A549 (cell line): ENCODE measurements at regions of chr17 and their contacts with region 1.

Region 1: GRCh38 chr17:82418001-82418986 is at the starts of genes HEXD and OGFOD3:
- DNase-seq: peak; percentile 86 to 90
- ATAC-seq: peak; percentile 83 to 86
- H3K4me3 ChIP-seq: peak within 1 kb of the TSS; percentile 67
- H3K27ac ChIP-seq: peak within 1 kb of the TSS; percentile 92 to 96
- H3K4me1 ChIP-seq: peaks cover 11% of the 10 kb centered on the region; the same call in 2 of the 3 replicates
- CTCF ChIP-seq: no peak
- EP300 ChIP-seq: no peak
- POLR2A ChIP-seq: peak; percentile 81
- RAD21 ChIP-seq: no peak; a peak in 1 of 5 replicates
- polyA plus RNA-seq, gene HEXD: 18.0 and 18.4 TPM in 2 replicates
- polyA plus RNA-seq, gene OGFOD3: 14.9 and 15.2 TPM in 2 replicates

Region 2: DNA sequence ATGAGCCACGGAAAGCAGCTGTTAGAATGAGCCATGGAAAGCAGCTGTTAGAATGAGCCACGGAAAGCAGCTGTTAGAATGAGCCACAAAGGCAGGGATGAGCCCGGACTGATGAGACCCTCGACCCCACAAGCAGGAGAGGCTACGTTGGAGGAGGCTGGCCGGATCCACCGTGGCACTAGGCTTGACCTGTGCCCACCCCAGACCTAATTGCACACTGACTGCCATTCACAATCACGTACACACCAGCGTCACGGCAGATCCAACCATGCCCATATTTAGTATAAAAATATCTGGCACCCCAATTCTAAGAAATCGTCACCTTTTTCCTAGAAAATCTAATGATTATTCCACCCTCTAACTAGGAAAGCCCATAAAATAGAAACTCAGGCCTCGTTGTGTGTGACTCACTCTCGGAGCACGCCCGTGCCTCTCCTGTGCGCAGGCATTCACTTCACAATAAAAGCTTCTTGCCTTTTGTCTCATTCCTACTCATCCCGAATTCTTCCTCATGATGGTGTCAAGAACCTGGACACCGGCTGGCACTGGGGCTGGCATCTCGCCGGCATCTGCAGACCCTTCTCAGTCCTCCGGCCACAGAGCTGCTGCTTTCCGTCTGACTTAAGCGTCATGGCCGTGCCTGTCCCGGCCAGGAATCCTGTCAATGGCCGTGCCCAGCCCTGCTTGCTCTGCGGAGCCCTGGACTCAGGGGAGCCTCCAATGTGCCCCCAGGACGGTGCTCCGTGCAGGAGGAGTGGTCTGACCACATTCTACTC is 79.2 kb before region 1 on chr17:
- CTCF ChIA-PET with region 1: interaction called, 32 read pairs
- POLR2A ChIA-PET with region 1: no interaction called
- DNase-seq: peak; percentile 86 to 94
- ATAC-seq: peak; percentile 81 to 89
- H3K4me3 ChIP-seq: peak overlapping the region; percentile 37
- H3K27ac ChIP-seq: peak overlapping the region; percentile 86 to 92
- H3K4me1 ChIP-seq: peaks cover 42% of the 10 kb centered on the region
- CTCF ChIP-seq: no peak
- EP300 ChIP-seq: no peak
- POLR2A ChIP-seq: peak; percentile 29; the same call in 1 of the 2 replicates
- RAD21 ChIP-seq: no peak; a peak in 1 of 5 replicates

Region 3: DNA sequence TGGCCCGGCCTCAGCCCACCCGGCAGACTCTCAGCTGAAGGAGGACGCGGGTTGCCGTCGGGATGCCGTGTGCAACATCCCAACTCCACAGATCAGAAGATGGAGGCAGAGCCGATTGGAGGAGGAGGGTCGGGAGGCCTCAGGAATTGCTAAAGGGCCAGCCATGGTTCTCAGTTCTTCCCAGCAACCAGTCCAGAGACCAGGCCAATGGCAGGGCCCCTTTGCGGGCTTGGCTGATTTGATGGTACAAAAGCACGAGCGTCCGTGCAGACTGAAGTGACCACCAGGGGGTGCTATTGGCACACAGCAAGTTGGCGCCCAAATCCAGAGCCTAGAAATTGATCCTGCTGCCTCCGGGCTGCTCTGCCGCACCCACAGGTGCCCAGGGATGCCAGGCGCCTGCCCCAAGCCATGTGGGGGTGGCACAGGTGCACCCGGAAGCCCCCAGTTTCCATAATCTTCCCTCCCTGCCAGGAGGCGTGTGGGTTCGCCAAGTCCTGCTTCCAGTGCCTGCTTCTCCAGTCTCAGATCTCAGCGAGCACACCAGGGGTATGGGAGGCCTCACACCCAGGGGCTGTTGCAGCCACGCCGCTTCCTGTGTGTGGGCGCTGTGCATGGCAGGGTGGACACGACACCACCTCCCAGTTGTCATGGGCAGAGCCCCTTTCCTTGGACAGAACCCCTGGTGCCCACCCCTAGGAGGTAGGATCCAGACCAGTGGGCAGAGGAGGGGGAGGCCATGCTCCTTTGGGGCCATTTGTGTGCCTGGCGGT is 66.4 kb before region 1 on chr17:
- CTCF ChIA-PET with region 1: interaction called, 117 read pairs
- POLR2A ChIA-PET with region 1: no interaction called
- DNase-seq: peak; percentile 88 to 93
- ATAC-seq: peak; percentile 75 to 92
- H3K4me3 ChIP-seq: no peak overlapping the region
- H3K27ac ChIP-seq: no peak overlapping the region
- H3K4me1 ChIP-seq: peaks cover 19% of the 10 kb centered on the region; the same call in 2 of the 3 replicates
- CTCF ChIP-seq: peak; percentile 98
- EP300 ChIP-seq: no peak
- POLR2A ChIP-seq: no peak
- RAD21 ChIP-seq: peak; percentile 97

Region 4: GRCh38 chr17:82370471-82371332 is 47.6 kb before region 1 on chr17:
- CTCF ChIA-PET with region 1: interaction called, 12 read pairs
- POLR2A ChIA-PET with region 1: no interaction called
- DNase-seq: no peak
- ATAC-seq: no peak; a peak in 1 of 6 replicates
- H3K4me3 ChIP-seq: peak overlapping the region; percentile 13; the same call in 1 of the 3 replicates
- H3K27ac ChIP-seq: no peak overlapping the region
- H3K4me1 ChIP-seq: peaks cover 8% of the 10 kb centered on the region; the same call in 1 of the 3 replicates
- CTCF ChIP-seq: no peak
- EP300 ChIP-seq: no peak
- POLR2A ChIP-seq: no peak
- RAD21 ChIP-seq: no peak

Region 5: DNA sequence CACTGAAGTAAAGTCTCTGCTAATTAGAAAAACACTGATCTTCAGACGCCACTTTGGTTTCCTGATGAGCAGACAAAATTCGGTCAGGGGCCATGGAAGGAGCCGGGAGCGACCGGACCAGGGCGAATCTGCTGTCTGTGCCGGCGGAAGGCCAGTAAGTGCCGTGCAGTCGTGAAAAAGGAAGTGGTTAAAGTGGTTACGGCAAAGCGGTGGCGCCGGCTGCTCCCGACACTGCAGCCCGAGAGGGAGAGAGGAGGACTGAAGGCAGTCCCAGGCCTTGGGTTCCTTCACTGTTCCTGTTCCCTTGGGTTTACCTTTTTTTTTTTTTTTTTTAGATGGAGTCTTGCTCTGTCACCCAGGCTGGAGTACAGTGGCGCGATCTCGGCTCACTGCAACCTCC is 17.5 kb before region 1 on chr17:
- CTCF ChIA-PET with region 1: interaction called, 21 read pairs
- POLR2A ChIA-PET with region 1: no interaction called
- DNase-seq: no peak
- ATAC-seq: no peak
- H3K4me3 ChIP-seq: no peak overlapping the region
- H3K27ac ChIP-seq: no peak overlapping the region
- H3K4me1 ChIP-seq: peaks cover 15% of the 10 kb centered on the region
- CTCF ChIP-seq: no peak
- EP300 ChIP-seq: no peak
- POLR2A ChIP-seq: no peak
- RAD21 ChIP-seq: no peak